ENCODE measurements at regions of chr17 and their contacts with region 1.

Region 1: GRCh38 chr17:10618202-10618635 is 38.9 kb downstream of the MYH3 start:
- DNase-seq: peak; percentile 46
- H3K4me3 ChIP-seq: no peak overlapping the region
- H3K27ac ChIP-seq: no peak overlapping the region
- H3K4me1 ChIP-seq: no peaks in the 10 kb centered on the region
- H3K27me3 ChIP-seq: no peaks in the 10 kb centered on the region
- CTCF ChIP-seq: peak; percentile 90 to 93
- POLR2A ChIP-seq: no peak

Region 2: DNA sequence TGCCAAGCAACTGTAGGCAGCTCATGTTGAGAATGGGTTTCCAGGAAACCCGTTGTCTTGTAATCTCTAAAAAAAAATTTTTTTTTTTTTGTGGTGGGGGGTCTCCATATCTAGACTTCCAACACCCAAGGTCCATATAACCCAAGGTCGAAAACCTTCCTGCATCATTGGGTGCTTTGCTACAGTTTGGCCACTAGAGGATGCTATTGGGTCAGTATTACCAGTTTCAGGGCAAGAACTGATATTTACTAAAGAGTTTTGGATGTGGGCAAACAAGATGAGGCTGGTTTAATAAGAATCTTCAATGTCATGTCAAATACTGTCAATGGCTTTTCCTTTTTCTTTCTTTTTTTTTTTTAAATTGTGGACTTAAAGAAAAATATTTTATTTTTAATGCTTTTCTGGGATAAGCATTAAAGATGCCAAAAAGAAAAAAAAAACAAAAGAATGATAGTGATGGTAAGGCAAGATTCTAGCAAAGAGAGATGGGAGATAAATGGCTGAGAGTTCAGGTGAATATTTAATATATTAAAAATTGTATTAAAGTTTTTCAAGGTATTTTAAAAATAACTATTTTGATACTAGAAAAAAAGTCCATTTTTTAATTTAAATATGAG is 889.1 kb before region 1 on chr17:
- CTCF ChIA-PET with region 1: interaction called, 3 read pairs
- POLR2A ChIA-PET with region 1: no interaction called
- dilution Hi-C with region 1: no loop called
- intact Hi-C with region 1: loop called (anchors 10 kb)
- DNase-seq: peak; percentile 7
- H3K4me3 ChIP-seq: no peak overlapping the region
- H3K27ac ChIP-seq: no peak overlapping the region
- H3K4me1 ChIP-seq: no peaks in the 10 kb centered on the region
- H3K27me3 ChIP-seq: no peaks in the 10 kb centered on the region
- CTCF ChIP-seq: peak; percentile 74 to 85
- POLR2A ChIP-seq: no peak

Region 3: DNA sequence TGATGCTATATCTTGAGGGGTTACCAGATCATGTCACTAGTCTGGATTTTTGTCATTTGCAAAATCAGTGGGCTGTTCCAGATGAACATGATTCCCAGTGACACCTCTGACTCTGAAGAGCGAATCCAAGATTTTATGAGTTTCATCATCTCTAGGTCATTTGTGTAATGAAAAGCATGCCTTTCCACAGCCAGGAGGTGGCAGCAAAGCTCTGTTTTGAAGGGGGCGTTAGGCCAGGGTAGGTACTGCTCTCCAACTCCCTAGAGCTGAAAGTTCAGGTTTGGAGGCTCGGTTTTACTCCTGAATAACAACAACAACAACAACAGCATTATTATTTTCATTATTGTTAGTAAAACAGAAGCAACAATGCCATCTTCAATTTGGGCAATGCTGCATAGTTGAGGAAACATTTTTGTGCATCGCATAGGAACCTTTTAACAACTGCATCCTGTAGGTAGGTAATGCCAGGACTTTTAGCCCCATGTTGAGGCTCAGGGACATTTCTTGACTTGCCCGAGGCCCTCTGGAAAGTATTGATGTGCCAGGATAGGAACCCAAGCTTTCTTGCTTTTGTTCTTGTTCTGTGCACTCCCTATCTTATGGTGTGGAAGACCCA is 322.4 kb before region 1 on chr17:
- CTCF ChIA-PET with region 1: interaction called, 6 read pairs
- POLR2A ChIA-PET with region 1: no interaction called
- dilution Hi-C with region 1: no loop called
- intact Hi-C with region 1: loop called (anchors 1 kb)
- DNase-seq: no peak
- H3K4me3 ChIP-seq: no peak overlapping the region
- H3K27ac ChIP-seq: no peak overlapping the region
- H3K4me1 ChIP-seq: no peaks in the 10 kb centered on the region
- H3K27me3 ChIP-seq: no peaks in the 10 kb centered on the region
- CTCF ChIP-seq: peak in 1 of 2 donors; percentile 29
- POLR2A ChIP-seq: no peak

Region 4: GRCh38 chr17:10547351-10547750 is 70.9 kb before region 1 on chr17:
- CTCF ChIA-PET with region 1: no interaction called
- POLR2A ChIA-PET with region 1: no interaction called
- dilution Hi-C with region 1: no loop called
- intact Hi-C with region 1: loop called (anchors 2 kb)
- DNase-seq: no peak
- H3K4me3 ChIP-seq: no peak overlapping the region
- H3K27ac ChIP-seq: no peak overlapping the region
- H3K4me1 ChIP-seq: no peaks in the 10 kb centered on the region
- H3K27me3 ChIP-seq: no peaks in the 10 kb centered on the region
- CTCF ChIP-seq: no peak
- POLR2A ChIP-seq: no peak

Region 5: DNA sequence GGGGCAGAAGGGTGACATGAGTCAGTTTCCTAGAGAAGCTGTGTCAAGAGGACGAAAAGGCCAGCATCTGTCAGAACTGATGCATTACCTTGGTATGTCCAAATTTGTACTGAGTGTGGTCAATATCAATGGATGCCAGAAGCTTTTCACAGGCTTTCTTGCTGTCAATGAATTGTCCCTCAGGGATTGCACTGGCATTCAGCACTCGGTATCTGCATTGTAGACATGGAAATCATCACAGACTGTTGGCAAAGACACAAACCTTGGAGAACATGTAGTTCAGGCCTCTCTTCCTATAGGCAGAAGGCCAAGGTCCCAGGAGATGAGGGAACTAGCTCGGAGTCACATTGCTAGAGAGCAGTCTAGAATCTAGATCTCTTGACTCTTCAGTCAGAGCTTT is 22.3 kb after region 1 on chr17:
- CTCF ChIA-PET with region 1: interaction called, 27 read pairs
- POLR2A ChIA-PET with region 1: no interaction called
- dilution Hi-C with region 1: no loop called
- intact Hi-C with region 1: no loop called
- DNase-seq: no peak
- H3K4me3 ChIP-seq: no peak overlapping the region
- H3K27ac ChIP-seq: no peak overlapping the region
- H3K4me1 ChIP-seq: no peaks in the 10 kb centered on the region
- H3K27me3 ChIP-seq: no peaks in the 10 kb centered on the region
- CTCF ChIP-seq: no peak
- POLR2A ChIP-seq: no peak

Measured in endothelial cell of umbilical vein (primary cell).